ENCODE measurements at regions of chr9 and their contacts with region 1.

Region 1: DNA sequence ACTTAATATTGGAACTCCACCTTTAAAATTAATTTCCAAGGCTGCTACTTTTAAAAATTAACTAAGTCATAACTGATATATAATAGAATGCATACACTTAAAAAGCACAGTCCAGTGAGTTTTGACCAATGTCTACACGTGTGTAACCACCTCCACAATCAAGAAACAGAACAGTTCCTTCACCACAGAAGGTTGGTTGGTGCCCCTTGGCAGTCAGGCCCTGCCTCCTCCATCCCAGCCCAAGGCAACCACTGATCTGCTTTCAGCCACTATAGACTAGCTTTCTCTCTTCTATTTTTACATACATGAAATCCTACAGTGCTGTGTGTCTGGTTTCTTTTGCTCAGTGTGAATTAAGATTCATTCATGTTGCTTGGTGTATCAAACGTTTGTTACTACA is 215.2 kb downstream of the CRB2 start:
- DNase-seq: no peak
- H3K4me3 ChIP-seq: no peak overlapping the region
- H3K27ac ChIP-seq: no peak overlapping the region
- H3K4me1 ChIP-seq: peaks cover 21% of the 10 kb centered on the region
- H3K27me3 ChIP-seq: no peaks in the 10 kb centered on the region
- CTCF ChIP-seq: no peak

Region 2: DNA sequence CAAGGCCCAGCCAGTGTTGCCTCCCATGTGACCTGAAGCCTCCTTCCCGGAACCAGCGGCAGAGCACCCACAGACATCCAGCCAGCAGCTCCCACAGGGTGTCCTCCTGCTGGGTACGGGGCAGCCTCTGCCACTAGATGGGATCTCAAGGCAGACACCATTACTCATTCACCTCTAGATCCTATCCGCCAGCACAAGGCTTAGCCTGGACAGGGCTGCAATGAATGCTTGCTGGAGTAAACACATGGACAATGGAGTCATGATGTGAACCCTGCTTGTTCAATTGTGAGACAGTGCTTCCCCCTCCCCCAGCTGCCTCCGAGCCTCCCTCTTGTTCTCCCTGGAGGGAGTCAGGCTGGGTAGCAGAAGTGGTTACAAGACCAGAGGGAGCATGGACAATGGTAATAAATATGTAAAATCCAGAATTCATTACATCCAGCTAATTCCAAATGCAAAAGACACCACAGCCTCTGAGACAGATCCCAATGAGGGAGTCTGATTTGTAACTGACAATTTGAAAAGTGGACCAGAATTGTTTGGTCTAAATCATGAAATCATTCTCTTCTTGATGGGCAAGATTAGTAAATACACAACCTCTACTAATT is 83.2 kb before region 1 on chr9:
- intact Hi-C with region 1: no loop called
- DNase-seq: no peak
- H3K4me3 ChIP-seq: no peak overlapping the region
- H3K27ac ChIP-seq: no peak overlapping the region
- H3K4me1 ChIP-seq: no peaks in the 10 kb centered on the region
- H3K27me3 ChIP-seq: no peaks in the 10 kb centered on the region
- CTCF ChIP-seq: no peak

Region 3: DNA sequence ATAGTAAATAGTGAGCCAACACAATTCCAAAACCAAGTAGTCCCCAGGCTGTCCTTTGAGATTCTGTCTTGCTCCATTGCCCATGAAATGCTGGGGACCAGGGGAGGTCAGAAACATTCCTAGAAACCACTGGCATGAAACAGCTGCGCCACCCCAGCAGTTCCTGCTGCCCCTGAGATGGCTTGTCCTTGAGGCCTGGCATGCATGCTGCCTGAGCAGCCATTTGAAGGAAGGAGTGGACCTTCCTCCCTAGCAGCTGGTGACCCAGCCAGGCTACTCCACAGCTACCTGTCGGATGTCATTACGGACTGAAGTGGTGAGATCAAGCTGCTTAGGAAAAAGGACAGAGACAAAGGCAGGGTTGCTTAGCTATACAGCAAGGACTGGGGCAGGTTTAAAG is 98.1 kb after region 1 on chr9:
- intact Hi-C with region 1: loop called (anchors 10 kb)
- DNase-seq: no peak
- H3K4me3 ChIP-seq: no peak overlapping the region
- H3K27ac ChIP-seq: no peak overlapping the region
- H3K4me1 ChIP-seq: no peaks in the 10 kb centered on the region
- H3K27me3 ChIP-seq: no peaks in the 10 kb centered on the region
- CTCF ChIP-seq: no peak

Measured in left ventricle myocardium inferior (tissue), 1 donor.